Ascending aorta (tissue), 2 donors: ENCODE measurements at regions of chr1 and their contacts with region 1.

Region 1: DNA sequence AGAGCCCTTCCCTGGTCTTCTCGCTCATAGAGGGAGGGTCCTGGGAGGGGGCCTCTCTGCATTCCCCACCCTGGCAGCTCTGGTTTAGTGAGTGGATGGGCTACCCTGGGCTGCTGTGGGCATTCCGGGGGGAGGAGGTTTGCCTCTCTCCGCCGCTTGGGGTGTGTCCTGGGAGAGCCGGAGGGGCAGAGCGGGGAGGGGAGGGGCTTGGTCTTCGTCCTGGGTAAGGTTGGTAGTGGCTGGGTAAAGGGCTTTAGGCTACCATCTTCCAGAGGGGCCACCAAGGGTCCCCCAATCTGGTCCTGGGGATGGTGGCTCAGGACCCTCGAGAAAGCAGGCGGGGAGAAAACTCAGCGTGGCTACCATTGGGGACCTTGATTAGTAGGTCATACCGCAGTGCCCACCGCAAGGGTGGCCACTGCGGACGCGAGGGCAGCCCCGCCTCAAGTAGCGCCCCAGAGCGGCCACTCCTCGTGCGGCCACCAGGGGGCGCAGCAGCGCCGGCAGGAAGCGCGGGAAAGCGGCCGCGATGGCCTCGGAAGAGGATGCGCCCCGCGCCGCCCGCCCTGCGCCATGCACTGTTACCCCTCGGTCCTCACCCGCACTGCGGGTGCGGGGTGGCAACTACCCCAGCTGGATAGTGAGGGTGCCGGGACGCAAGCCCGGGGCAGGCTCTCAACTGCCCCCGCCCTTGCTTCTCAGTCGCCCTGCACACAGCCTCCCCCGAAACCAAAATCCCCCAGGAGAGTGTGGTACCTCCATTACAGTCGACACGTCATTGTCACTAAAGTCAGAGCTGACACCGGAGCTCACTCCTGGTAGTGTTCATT is 44.1 kb upstream of the SLC25A33 start:
- DNase-seq: peak in 1 of 2 donors; percentile 67
- H3K4me3 ChIP-seq: peak overlapping the region in 1 of 2 donors; percentile 47
- H3K27ac ChIP-seq: no peak overlapping the region
- H3K4me1 ChIP-seq: peaks cover 0 to 4% of the 10 kb centered on the region in 2 donors
- H3K27me3 ChIP-seq: no peaks in the 10 kb centered on the region
- CTCF ChIP-seq: peak; percentile 91 to 97 (median 93)

Region 2: GRCh38 chr1:8590526-8591351 is 904.4 kb before region 1 on chr1:
- intact Hi-C with region 1: no loop called
- DNase-seq: no peak
- H3K4me3 ChIP-seq: peak overlapping the region in 1 of 2 donors; percentile 6
- H3K27ac ChIP-seq: peak overlapping the region; percentile 8 to 41
- H3K4me1 ChIP-seq: peaks cover 0 to 3% of the 10 kb centered on the region in 2 donors
- H3K27me3 ChIP-seq: no peaks in the 10 kb centered on the region
- CTCF ChIP-seq: no peak

Region 3: DNA sequence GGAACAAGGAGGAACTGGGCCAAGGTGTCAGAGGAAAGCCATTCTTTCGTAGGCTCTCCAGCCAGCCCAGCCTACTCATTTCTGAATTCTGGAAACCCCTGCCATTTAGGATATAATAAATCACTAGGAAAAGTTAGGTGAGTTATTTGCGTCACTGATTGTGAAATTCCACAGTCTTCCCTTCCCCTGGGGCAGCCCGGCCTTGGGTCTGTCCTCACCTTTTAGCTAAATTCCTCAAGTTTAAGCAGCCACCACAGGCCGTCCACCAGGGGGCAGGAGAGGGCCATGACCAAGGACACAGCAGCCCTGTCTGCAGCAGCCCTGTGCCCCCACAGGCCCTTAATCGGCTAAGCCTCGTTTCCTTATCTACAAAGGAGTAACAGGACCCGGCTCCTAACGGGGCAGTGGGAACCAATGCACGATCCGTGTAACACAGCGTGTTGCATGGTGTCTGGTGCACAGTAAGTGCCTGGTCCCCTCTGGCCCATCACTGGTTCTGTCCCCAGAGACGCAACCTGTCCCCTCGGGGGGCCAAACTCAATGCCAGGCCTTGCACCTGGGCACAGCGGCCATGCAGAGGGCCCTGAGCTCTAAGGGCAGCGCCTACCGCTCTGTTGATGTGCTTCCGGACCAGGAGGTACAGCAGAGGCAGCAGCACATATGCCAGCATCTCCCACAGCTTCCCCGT is 384.3 kb before region 1 on chr1:
- intact Hi-C with region 1: loop called (anchors 10 kb)
- DNase-seq: peak; percentile 47 to 94
- H3K4me3 ChIP-seq: no peak overlapping the region
- H3K27ac ChIP-seq: no peak overlapping the region
- H3K4me1 ChIP-seq: peaks cover 0 to 6% of the 10 kb centered on the region in 2 donors
- H3K27me3 ChIP-seq: no peaks in the 10 kb centered on the region
- CTCF ChIP-seq: peak; percentile 86 to 93 (median 93)

Region 4: GRCh38 chr1:9269078-9269501 is 226.1 kb before region 1 on chr1:
- intact Hi-C with region 1: loop called (anchors 1 kb)
- DNase-seq: no peak
- H3K4me3 ChIP-seq: no peak overlapping the region
- H3K27ac ChIP-seq: no peak overlapping the region
- H3K4me1 ChIP-seq: peaks cover 3 to 7% of the 10 kb centered on the region in 2 donors
- H3K27me3 ChIP-seq: no peaks in the 10 kb centered on the region
- CTCF ChIP-seq: no peak

Region 5: DNA sequence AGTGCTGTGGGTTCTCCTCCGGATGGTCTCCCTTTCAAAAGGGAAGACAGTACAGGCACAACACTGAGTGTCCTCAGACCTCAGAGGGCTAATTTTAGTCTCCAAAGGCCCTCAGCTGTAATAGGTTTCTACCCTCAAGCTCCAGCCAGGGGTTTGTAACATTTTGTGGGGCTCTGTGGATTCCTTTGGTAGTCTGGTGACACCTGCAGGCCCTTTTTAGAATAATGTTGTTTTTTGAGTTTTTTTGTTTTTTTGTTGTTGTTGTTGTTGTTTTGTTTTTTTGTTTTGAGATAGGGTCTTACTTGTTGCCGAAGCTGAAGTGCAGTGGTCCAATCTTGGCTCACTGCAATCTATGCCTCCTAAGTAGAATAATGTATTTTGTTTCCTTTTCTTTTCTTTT is 78.6 kb after region 1 on chr1:
- intact Hi-C with region 1: loop called (anchors 1 kb)
- DNase-seq: no peak
- H3K4me3 ChIP-seq: no peak overlapping the region
- H3K27ac ChIP-seq: no peak overlapping the region
- H3K4me1 ChIP-seq: no peaks in the 10 kb centered on the region
- H3K27me3 ChIP-seq: no peaks in the 10 kb centered on the region
- CTCF ChIP-seq: peak; percentile 14 to 56 (median 17)